Heart left ventricle (tissue), 16 donors: ENCODE measurements at regions of chr5 and their contacts with region 1.

Region 1: DNA sequence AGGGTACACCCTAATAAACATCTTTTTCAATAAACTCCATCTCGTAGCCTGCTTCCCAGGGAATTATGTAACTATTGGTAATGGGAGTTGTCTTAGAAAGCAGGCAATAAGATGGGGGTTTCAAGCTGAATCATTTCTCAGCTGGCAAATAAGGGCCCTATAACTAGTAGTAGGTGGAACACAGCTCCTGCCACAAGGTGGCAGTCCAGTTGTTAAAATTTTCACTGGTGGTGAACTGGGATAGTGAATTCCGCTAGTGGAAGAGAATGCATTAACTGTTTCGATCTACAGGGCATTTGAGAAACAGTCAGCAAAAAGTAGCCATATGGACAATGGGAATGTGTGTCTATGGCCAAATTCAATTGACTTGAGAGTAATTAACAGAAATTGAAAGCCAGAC is 27.7 kb downstream of the PCDHB15 start:
- DNase-seq: no peak
- ATAC-seq: no peak
- H3K4me3 ChIP-seq: no peak overlapping the region
- H3K27ac ChIP-seq: no peak overlapping the region
- H3K4me1 ChIP-seq: no peaks in the 10 kb centered on the region
- H3K27me3 ChIP-seq: no peaks in the 10 kb centered on the region
- CTCF ChIP-seq: peak in 2 of 12 donors; percentile 7 to 12
- POLR2A ChIP-seq: no peak

Region 2: GRCh38 chr5:141245250-141245717 is 27.6 kb before region 1 on chr5 and contains the start of gene PCDHB15:
- intact Hi-C with region 1: no loop called
- DNase-seq: peak in 2 of 5 donors; percentile 19 to 30
- ATAC-seq: peak; percentile 26 to 60 (median 32)
- H3K4me3 ChIP-seq: peak within 1 kb of the TSS in 11 of 12 donors; percentile 23 to 60 (median 50)
- H3K27ac ChIP-seq: peak within 1 kb of the TSS in 2 of 12 donors; percentile 18 to 62
- H3K4me1 ChIP-seq: peaks cover 0 to 2% (median 0%) of the 10 kb centered on the region in 12 donors
- H3K27me3 ChIP-seq: peaks cover 0 to 19% (median 4%) of the 10 kb centered on the region in 9 donors
- CTCF ChIP-seq: peak in 11 of 12 donors; percentile 18 to 58 (median 45)
- POLR2A ChIP-seq: no peak
- total RNA-seq, gene PCDHB15: 3.7 to 7.5 (median 4.5) TPM

Region 3: DNA sequence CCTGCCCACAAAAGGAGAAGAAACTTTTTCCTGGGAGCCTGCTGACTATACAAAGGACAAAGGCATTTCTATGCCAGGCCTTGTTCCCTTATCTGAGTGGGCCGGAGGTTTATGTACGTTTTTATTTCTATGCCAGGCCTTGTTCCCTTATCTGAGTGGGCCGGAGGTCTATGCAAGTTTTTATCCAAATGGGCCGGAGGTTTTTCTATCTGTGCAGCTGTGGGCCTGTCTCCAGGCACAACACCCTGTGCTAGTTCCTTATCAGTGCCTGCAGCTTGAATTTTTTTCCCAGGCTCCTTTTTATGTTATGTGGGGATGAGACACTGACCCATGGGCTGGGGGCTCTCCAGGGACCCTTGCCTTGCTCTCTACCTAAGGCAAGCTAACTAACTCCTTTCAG is 25.5 kb after region 1 on chr5:
- intact Hi-C with region 1: loop called in 1 of 10 experiments (anchors 2 kb)
- DNase-seq: no peak
- ATAC-seq: no peak
- H3K4me3 ChIP-seq: no peak overlapping the region
- H3K27ac ChIP-seq: peak overlapping the region in 1 of 12 donors; percentile 10
- H3K4me1 ChIP-seq: no peaks in the 10 kb centered on the region
- H3K27me3 ChIP-seq: no peaks in the 10 kb centered on the region
- CTCF ChIP-seq: no peak
- POLR2A ChIP-seq: no peak